WTC11 (cell line): ENCODE measurements at regions of chr17 and their contacts with region 1.

Region 1: GRCh38 chr17:78250891-78251794 is 19.7 kb downstream of the TMEM235 start:
- DNase-seq: peak; percentile 96
- ATAC-seq: peak; percentile 77
- H3K4me3 Mint-ChIP-seq: no peak overlapping the region; the same call in 1 of the 2 replicates
- H3K27ac Mint-ChIP-seq: peak overlapping the region; percentile 76; the same call in 1 of the 2 replicates
- H3K4me1 Mint-ChIP-seq: peaks cover 28% of the 10 kb centered on the region
- H3K27me3 Mint-ChIP-seq: no peaks in the 10 kb centered on the region
- CTCF ChIP-seq: peak; percentile 97

Region 2: DNA sequence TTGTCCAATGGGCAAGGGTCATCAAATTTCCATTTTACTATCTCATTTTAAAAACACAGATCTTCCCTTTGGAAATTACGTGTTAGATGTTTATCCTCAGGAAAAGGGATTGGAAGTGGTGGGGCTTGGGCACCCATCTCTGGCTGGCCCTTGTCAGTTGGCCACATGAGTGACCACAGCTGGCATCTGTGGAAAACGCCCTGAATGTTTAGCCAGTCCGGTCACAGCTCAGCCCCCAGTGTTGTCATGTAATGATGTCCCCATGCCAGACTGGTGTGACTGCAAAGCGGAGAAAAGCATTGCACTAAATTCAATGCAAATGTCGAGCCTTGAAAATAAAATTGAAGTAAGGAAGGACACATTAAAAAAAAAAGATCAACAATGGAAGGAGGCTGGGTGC is 175.6 kb before region 1 on chr17:
- CTCF ChIA-PET with region 1: no interaction called
- POLR2A ChIA-PET with region 1: no interaction called
- DNase-seq: no peak
- ATAC-seq: no peak
- H3K4me3 Mint-ChIP-seq: no peak overlapping the region
- H3K27ac Mint-ChIP-seq: no peak overlapping the region
- H3K4me1 Mint-ChIP-seq: no peaks in the 10 kb centered on the region
- H3K27me3 Mint-ChIP-seq: no peaks in the 10 kb centered on the region
- CTCF ChIP-seq: no peak

Region 3: DNA sequence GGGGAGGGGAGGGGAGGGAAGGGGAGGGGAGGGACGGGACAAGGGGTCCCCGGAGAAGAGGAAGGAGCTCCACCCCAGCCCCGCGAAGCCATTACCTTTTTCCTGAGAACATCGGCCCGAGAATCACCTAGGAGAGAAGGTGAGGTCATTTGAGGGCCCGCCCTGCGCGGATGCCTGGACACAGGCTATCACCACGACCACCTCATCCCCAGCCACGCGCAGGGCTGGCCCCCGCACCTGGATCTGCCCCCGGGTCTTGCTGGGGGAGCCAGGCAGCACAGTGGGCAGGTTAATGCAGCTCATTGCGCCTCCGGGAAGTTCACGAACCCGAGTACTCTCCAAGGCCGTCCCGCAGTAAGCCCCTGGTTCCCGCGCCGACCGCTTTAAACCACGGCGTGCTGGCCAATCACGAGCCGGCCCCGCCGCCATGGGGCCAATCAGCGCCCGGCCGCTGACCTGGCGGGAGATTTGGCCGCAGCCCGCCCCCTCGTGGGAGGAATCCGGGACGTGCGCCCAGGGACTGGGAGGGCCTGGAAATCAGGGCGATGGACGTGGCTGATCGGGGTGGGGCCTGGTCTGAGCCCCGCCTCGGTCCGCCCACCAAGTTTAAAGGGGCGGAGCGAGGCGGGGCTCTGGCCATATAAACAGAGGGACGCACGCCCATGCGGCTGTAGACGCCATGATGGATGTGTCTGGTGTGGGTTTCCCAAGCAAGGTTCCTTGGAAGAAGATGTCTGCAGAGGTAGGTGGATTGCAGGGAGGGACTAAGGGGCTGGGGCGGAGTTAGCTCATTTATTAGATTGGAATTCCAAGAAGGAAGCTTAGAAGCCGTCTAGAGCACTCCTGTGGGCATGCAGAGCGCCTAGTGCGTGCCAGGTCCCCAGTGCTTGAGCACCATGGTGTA is 64.2 kb before region 1 on chr17 and contains the starts of genes AFMID and TK1:
- CTCF ChIA-PET with region 1: interaction called, 23 read pairs
- POLR2A ChIA-PET with region 1: interaction called, 5 read pairs
- DNase-seq: peak; percentile 100
- ATAC-seq: peak; percentile 96
- H3K4me3 Mint-ChIP-seq: peak within 1 kb of the TSS; percentile 82
- H3K27ac Mint-ChIP-seq: peak within 1 kb of the TSS; percentile 83
- H3K4me1 Mint-ChIP-seq: peaks cover 28% of the 10 kb centered on the region
- H3K27me3 Mint-ChIP-seq: no peaks in the 10 kb centered on the region
- CTCF ChIP-seq: peak; percentile 73; the same call in 1 of the 2 replicates
- total RNA-seq, gene AFMID: 45.1 to 58.7 TPM (median 48.8 TPM) in 3 replicates
- total RNA-seq, gene TK1: 72.5 to 84.1 TPM (median 82.6 TPM) in 3 replicates

Region 4: GRCh38 chr17:78231991-78232858 is 18.9 kb before region 1 on chr17:
- CTCF ChIA-PET with region 1: interaction called, 23 read pairs
- POLR2A ChIA-PET with region 1: interaction called, 4 read pairs
- DNase-seq: peak; percentile 68
- ATAC-seq: peak; percentile 74
- H3K4me3 Mint-ChIP-seq: peak overlapping the region; percentile 70
- H3K27ac Mint-ChIP-seq: no peak overlapping the region
- H3K4me1 Mint-ChIP-seq: peaks cover 4% of the 10 kb centered on the region; the same call in 1 of the 2 replicates
- H3K27me3 Mint-ChIP-seq: peaks cover 32% of the 10 kb centered on the region
- CTCF ChIP-seq: no peak

Region 5: DNA sequence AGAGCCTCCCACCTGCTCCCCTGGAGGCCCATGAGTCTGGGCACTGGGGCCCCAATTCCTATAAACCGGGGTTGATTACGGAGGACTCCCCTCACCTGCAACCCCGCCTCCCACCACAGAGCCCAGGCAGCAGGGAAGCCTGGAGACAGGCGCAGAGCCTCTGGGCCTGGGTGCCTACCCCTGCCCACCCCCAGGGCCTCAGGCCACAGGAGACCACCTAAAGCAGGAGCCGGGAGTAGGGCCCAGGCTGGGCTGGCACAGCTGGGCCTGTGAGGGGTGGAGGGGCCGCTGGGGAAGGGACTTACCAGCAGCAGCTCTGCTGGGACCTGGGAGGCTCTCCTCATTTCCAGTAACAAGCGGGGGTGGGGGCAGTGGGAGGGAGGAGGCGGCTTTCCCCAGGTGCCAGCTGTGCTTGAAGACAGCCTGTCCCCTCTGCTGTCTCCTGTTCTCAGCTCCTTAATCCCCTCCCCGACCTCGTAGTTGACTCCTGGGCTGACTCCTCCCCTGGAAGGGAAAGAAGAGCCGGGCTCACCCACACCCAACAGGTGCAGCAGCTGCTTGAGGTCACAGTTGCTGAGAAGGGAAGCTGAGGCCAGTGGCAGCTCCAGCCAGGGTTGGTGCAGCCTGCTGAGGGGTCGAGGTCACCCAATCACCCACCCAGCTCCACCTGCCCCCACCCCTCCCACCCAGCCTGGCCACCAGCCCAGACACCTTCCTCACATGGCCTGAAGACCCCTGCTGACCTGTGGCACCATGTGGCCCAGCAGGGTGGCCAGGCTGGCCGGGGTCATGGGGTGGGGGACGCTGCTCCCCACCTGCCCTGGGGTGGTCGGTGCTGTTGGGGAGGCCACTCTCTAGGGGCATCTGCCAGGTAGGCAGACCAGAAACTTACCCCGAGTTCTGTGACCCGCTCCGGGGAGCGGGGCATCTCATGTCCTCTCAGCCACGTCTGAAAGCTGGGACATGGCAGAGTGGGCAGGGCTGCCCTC is 27.3 kb after region 1 on chr17:
- CTCF ChIA-PET with region 1: interaction called, 12 read pairs
- POLR2A ChIA-PET with region 1: no interaction called
- DNase-seq: peak; percentile 48
- ATAC-seq: peak; percentile 80
- H3K4me3 Mint-ChIP-seq: no peak overlapping the region
- H3K27ac Mint-ChIP-seq: no peak overlapping the region; the same call in 1 of the 2 replicates
- H3K4me1 Mint-ChIP-seq: peaks cover 23% of the 10 kb centered on the region
- H3K27me3 Mint-ChIP-seq: no peaks in the 10 kb centered on the region
- CTCF ChIP-seq: no peak

Region 6: GRCh38 chr17:78360371-78361224 is 109.5 kb after region 1 on chr17:
- CTCF ChIA-PET with region 1: interaction called, 17 read pairs
- POLR2A ChIA-PET with region 1: interaction called, 3 read pairs
- DNase-seq: peak; percentile 100
- ATAC-seq: peak; percentile 59
- H3K4me3 Mint-ChIP-seq: peak overlapping the region; percentile 74
- H3K27ac Mint-ChIP-seq: peak overlapping the region; percentile 93
- H3K4me1 Mint-ChIP-seq: peaks cover 71% of the 10 kb centered on the region
- H3K27me3 Mint-ChIP-seq: peaks cover 16% of the 10 kb centered on the region
- CTCF ChIP-seq: peak; percentile 94

Region 7: DNA sequence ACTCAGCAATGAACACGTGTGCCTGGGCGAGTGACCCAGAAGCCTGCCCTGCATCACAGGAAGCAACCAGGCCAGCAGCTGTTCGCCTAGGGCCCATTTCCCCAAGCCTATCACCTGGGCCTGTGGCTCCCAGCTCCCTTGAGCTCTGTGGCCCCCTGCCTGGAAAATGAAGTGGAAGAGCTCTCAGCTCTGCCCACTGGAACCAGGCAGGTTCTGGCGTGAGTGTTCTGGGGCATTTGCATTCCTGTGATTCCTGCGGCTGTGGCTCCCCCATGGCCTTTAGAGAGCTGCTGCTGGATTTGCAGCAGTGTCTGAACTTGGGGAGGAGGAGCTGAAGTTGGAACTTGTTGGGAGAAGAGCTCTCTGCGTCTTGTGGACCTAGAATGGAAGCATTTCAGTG is 150.1 kb after region 1 on chr17:
- CTCF ChIA-PET with region 1: no interaction called
- POLR2A ChIA-PET with region 1: no interaction called
- DNase-seq: no peak
- ATAC-seq: no peak
- H3K4me3 Mint-ChIP-seq: no peak overlapping the region
- H3K27ac Mint-ChIP-seq: peak overlapping the region; percentile 45; the same call in 1 of the 2 replicates
- H3K4me1 Mint-ChIP-seq: no peaks in the 10 kb centered on the region
- H3K27me3 Mint-ChIP-seq: no peaks in the 10 kb centered on the region
- CTCF ChIP-seq: no peak